Endothelial cell of umbilical vein (primary cell): ENCODE measurements at regions of chr7 and their contacts with region 1.

Region 1: DNA sequence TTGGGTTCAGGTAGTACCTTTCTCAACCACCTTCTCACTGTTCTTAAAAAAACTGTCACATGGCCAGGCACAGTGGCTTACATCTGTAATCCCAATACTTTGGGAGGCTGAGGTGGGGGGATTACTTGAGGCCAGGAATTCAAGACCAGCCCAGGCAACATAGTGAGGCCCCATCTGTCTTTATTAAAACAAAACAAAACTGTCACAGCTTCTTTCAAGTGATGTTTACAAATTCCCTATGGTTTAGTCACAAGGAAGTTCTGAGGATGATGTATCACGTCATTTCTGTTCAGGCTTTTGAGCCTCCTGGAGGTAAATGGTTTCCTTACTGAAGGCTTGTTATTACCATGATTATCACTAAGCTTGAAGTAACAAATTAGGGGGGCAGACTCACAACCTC is 186.2 kb downstream of the CFTR start:
- DNase-seq: peak; percentile 67
- H3K4me3 ChIP-seq: no peak overlapping the region
- H3K27ac ChIP-seq: peak overlapping the region; percentile 62
- H3K4me1 ChIP-seq: peaks cover 14% of the 10 kb centered on the region
- H3K27me3 ChIP-seq: no peaks in the 10 kb centered on the region
- CTCF ChIP-seq: no peak
- POLR2A ChIP-seq: no peak

Region 2: DNA sequence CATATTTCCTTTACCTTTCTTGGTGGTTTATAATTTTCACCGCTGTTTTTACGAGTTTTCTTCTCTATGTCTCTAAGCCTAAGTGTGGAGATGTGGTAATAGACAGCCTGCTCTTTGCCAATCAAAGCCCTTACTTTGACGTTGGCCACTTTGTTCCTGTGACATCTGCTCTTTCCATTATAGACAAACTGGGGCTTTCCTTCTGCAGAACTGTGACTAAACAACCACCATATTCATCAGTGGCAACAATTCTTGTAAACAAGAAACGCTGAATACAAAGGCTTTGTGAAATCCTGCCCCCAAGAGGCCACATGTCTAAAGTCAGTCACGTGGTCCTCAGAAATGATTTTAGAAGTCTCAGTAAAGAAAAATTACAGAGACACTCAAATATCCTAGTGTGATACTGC is 863.3 kb before region 1 on chr7:
- CTCF ChIA-PET with region 1: no interaction called
- POLR2A ChIA-PET with region 1: no interaction called
- dilution Hi-C with region 1: no loop called
- intact Hi-C with region 1: no loop called
- DNase-seq: peak; percentile 75
- H3K4me3 ChIP-seq: no peak overlapping the region
- H3K27ac ChIP-seq: no peak overlapping the region
- H3K4me1 ChIP-seq: peaks cover 14% of the 10 kb centered on the region
- H3K27me3 ChIP-seq: no peaks in the 10 kb centered on the region
- CTCF ChIP-seq: peak; percentile 40 to 46
- POLR2A ChIP-seq: no peak

Region 3: DNA sequence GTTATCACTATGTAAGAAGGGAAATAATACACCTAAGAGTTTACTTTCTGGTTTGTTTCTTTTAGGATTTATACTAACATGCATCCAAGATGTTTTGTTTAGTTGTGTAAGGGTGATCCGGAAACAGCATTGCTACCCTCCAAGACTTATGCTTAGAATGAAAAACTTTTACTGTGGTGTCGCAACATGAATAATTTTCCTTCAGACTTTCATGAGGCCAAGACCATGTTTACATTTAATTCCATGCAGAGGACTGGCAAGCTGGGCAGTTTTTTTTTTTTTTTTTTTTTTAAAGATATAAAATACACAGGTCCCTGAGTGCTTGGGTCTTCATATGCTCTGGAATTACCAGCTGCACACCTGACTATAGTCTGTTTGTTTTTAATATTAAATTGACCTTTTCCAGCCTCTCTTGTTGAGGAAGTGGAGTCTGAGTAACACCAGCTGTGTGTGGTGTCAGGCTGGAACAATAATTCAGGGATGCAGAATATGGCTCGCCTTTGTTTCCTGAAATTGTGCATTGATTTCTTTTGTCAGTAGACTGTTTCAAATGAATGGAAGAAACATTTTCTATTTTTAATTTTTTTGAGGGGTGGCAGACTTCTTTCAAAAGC is 631.1 kb before region 1 on chr7:
- CTCF ChIA-PET with region 1: no interaction called
- POLR2A ChIA-PET with region 1: no interaction called
- dilution Hi-C with region 1: no loop called
- intact Hi-C with region 1: no loop called
- DNase-seq: peak; percentile 90
- H3K4me3 ChIP-seq: no peak overlapping the region
- H3K27ac ChIP-seq: peak overlapping the region; percentile 46
- H3K4me1 ChIP-seq: peaks cover 19% of the 10 kb centered on the region
- H3K27me3 ChIP-seq: no peaks in the 10 kb centered on the region
- CTCF ChIP-seq: no peak
- POLR2A ChIP-seq: no peak

Region 4: DNA sequence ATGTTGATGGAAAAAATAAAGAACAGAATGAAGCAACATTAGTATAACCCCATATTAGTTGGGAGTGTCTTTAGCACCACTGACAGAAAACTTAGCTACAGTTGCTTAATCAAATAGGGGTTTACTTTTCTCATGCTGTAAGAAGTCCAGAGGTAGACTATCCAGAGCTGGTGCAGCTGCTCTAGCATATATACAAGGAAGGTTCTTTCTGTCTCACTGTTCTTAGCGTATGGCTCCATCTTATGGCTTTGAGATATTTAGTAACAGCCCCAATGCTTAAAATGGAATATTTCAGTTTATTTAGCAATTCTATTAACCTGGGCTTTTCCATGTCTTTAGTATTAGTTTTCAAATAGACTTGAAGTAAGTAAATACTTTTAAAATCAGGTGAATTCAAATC is 328.0 kb before region 1 on chr7:
- CTCF ChIA-PET with region 1: no interaction called
- POLR2A ChIA-PET with region 1: no interaction called
- dilution Hi-C with region 1: no loop called
- intact Hi-C with region 1: no loop called
- DNase-seq: no peak
- H3K4me3 ChIP-seq: no peak overlapping the region
- H3K27ac ChIP-seq: no peak overlapping the region
- H3K4me1 ChIP-seq: no peaks in the 10 kb centered on the region
- H3K27me3 ChIP-seq: peaks cover 6 to 8% of the 10 kb centered on the region in 2 experiments
- CTCF ChIP-seq: no peak
- POLR2A ChIP-seq: no peak

Region 5: GRCh38 chr7:117600911-117601310 is 65.1 kb before region 1 on chr7:
- CTCF ChIA-PET with region 1: no interaction called
- POLR2A ChIA-PET with region 1: no interaction called
- dilution Hi-C with region 1: no loop called
- intact Hi-C with region 1: loop called (anchors 1 kb)
- DNase-seq: peak; percentile 71
- H3K4me3 ChIP-seq: peak overlapping the region in 1 of 3 experiments; percentile 19
- H3K27ac ChIP-seq: peak overlapping the region; percentile 82
- H3K4me1 ChIP-seq: peaks cover 22% of the 10 kb centered on the region
- H3K27me3 ChIP-seq: no peaks in the 10 kb centered on the region
- CTCF ChIP-seq: no peak
- POLR2A ChIP-seq: no peak

Region 6: DNA sequence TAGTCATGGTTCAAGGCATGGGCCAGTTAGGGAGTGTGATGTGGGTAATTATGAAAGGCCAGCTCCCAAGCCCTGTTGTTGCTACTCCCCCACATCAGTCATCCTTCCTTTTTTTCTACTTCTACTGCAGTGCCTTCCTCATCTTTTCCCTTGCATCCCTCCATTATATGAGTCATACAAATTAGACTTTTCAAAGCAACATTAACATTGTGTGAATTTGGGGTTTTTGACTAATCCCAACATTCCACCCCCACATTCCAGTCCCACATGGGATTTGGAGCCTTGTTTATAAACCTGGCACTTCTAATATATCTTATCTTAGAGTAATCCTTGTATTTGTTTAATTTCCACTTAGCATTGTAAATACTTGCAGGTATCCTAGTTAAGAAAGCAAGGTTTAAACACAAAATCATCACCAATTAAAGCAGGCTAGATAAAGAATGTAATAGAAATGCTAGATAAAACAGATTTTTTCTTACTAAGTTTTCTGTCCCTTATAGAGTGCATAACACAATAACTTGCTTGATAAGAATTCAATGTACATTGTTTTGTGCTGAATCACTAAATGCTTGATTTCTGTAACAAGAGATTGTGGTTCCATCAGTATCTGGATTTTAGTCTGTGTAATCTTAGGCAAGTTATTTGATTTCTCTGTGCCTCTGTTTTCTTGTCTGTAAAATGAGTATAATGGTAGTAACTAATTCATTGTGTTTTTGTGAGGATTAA is 20.4 kb before region 1 on chr7:
- CTCF ChIA-PET with region 1: interaction called, 5 read pairs
- POLR2A ChIA-PET with region 1: no interaction called
- dilution Hi-C with region 1: no loop called
- intact Hi-C with region 1: loop called (anchors 1 kb)
- DNase-seq: peak; percentile 60
- H3K4me3 ChIP-seq: peak overlapping the region in 1 of 3 experiments; percentile 9
- H3K27ac ChIP-seq: peak overlapping the region; percentile 82
- H3K4me1 ChIP-seq: peaks cover 20% of the 10 kb centered on the region
- H3K27me3 ChIP-seq: no peaks in the 10 kb centered on the region
- CTCF ChIP-seq: no peak
- POLR2A ChIP-seq: no peak